ENCODE measurements at regions of chr5 and their contacts with region 1.

Region 1: GRCh38 chr5:10283927-10284635 is 23.6 kb downstream of the CMBL start:
- DNase-seq: peak; percentile 85 to 95 (median 91)
- ATAC-seq: peak; percentile 88
- H3K4me3 ChIP-seq: no peak overlapping the region
- H3K4me1 ChIP-seq: peaks cover 27% of the 10 kb centered on the region
- CTCF ChIP-seq: peak; percentile 82

Region 2: DNA sequence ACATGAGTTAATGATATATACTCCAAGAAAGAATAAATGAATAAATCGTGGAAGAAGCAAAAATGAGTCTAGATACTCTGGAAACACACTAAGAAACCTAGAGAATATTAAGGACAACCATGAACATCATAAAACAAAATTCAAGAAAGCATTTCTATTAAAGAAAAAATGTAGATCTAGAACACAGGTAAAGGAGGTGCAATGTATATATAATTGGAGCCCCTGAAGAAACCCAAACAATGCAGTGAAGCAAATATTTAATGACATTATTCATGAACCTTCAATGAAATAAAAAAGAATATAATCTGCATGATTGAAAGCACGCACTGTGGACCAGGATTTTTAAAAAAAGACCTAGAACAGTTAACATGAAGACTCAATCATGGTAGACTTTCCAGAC is 184.5 kb before region 1 on chr5:
- intact Hi-C with region 1: no loop called
- DNase-seq: no peak
- ATAC-seq: no peak
- H3K4me3 ChIP-seq: no peak overlapping the region
- H3K4me1 ChIP-seq: no peaks in the 10 kb centered on the region
- CTCF ChIP-seq: no peak

Region 3: DNA sequence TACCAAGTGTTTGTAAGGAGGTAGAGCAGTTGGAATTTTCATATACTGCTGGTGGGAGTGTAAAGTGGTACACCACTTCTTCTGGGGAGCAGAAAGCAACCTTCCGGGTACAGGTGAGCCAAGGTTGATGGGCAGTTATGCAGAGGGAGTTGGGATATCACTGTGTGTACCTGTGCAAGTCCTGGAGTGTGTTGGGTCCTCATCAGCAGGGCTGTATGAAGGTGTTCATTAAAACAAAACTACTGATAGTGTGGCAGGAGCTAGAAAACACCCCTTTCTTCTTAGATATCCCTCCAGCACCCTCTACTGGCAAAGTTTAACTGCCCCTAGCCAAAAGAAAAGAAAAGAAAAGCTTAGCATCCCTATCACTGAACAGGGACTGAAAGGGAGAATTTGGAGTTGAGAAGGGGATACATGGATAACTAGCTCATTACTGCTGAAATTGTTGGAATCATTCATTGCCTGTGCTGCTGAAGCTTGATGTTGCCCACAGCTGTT is 80.2 kb after region 1 on chr5:
- intact Hi-C with region 1: loop called in 1 of 2 experiments (anchors 10 kb)
- DNase-seq: peak in 1 of 3 donors; percentile 60
- ATAC-seq: peak; percentile 69
- H3K4me3 ChIP-seq: no peak overlapping the region
- H3K4me1 ChIP-seq: peaks cover 12% of the 10 kb centered on the region
- CTCF ChIP-seq: no peak

Measured in mucosa of descending colon (tissue), 3 donors.